Activated CD4-positive, alpha-beta memory T cell treated with anti-CD3 and anti-CD28 coated beads for 36 hours (primary cell): ENCODE measurements at regions of chr5 and their contacts with region 1.

Region 1: GRCh38 chr5:156815988-156816599 is 34.0 kb upstream of the PPP1R2B start:
- DNase-seq: peak; percentile 53
- H3K4me3 Mint-ChIP-seq: no peak overlapping the region
- H3K27ac Mint-ChIP-seq: no peak overlapping the region
- H3K4me1 Mint-ChIP-seq: no peaks in the 10 kb centered on the region
- H3K27me3 Mint-ChIP-seq: no peaks in the 10 kb centered on the region

Region 2: GRCh38 chr5:155616779-155617392 is 1199.2 kb before region 1 on chr5:
- CTCF ChIA-PET with region 1: no interaction called
- POLR2A ChIA-PET with region 1: no interaction called
- intact Hi-C with region 1: loop called (anchors 10 kb)
- DNase-seq: peak; percentile 62
- H3K4me3 Mint-ChIP-seq: no peak overlapping the region
- H3K27ac Mint-ChIP-seq: no peak overlapping the region
- H3K4me1 Mint-ChIP-seq: no peaks in the 10 kb centered on the region
- H3K27me3 Mint-ChIP-seq: peaks cover 15% of the 10 kb centered on the region

Region 3: DNA sequence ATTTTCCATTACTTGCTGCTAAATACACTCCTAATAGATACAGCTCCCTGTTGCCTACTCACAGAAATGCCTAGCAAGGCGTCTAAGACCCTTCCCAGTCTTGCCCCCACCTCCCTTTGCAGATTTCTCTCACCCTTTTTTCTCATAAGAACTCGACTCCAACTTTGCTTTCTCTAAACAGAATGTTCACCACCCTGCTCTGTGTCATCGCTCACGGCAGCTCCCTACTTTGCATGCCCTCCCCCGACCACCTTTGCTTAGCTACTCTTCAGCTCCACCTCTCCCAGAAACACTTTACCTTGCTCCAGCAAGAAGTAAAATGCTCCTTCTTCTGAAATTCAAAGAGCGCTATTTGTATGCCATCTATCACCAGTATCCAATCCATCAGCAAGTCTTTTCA is 18.8 kb after region 1 on chr5:
- CTCF ChIA-PET with region 1: no interaction called
- POLR2A ChIA-PET with region 1: no interaction called
- intact Hi-C with region 1: no loop called
- DNase-seq: no peak
- H3K4me3 Mint-ChIP-seq: no peak overlapping the region
- H3K27ac Mint-ChIP-seq: no peak overlapping the region
- H3K4me1 Mint-ChIP-seq: no peaks in the 10 kb centered on the region
- H3K27me3 Mint-ChIP-seq: peaks cover 2% of the 10 kb centered on the region